ENCODE measurements at regions of chr13 and their contacts with region 1.

Region 1: DNA sequence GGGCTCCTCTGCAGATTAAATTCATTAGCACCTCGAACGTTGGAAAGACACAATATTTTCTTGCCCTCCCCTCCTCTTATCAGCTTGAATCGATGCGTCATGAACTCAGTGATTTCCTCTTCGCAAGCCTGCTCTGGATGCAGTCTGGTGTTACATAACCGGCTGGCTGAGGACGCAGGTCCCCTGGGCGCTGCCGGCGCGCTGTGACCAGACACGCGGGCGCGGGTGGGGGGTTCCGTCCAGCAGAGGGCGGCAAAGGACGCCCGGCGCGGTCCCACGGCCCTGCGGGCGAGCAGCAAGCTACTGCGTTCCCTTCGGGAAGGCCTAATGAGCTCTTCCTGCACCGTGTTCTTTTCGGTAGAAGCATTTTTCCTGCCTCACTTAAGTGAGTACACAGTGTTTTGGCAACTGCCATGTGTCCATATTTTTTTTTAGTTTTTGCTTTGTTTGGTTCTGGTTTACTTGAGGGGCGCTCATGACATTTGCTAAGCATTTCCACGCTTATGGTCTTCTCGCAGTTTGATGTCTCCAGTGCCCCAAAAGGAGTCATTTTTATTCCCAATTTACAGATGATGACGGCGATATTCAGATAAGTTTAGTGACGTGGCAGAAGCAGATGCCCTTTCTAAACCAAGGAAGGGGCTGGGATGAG is 112.2 kb upstream of the MBNL2 start:
- DNase-seq: peak; percentile 90 to 96 (median 93)
- ATAC-seq: peak; percentile 95 to 98 (median 98)
- H3K4me3 ChIP-seq: peak overlapping the region in 8 of 12 donors; percentile 15 to 52 (median 20)
- H3K27ac ChIP-seq: peak overlapping the region in 6 of 12 donors; percentile 9 to 77 (median 46)
- H3K4me1 ChIP-seq: peaks cover 0 to 31% (median 22%) of the 10 kb centered on the region in 12 donors
- H3K27me3 ChIP-seq: peaks cover 0 to 10% (median 0%) of the 10 kb centered on the region in 9 donors
- CTCF ChIP-seq: peak; percentile 96 to 100 (median 98)
- POLR2A ChIP-seq: no peak

Region 2: GRCh38 chr13:97043302-97043701 is 66.7 kb before region 1 on chr13:
- intact Hi-C with region 1: no loop called
- DNase-seq: no peak
- ATAC-seq: no peak
- H3K4me3 ChIP-seq: no peak overlapping the region
- H3K27ac ChIP-seq: no peak overlapping the region
- H3K4me1 ChIP-seq: no peaks in the 10 kb centered on the region
- H3K27me3 ChIP-seq: no peaks in the 10 kb centered on the region
- CTCF ChIP-seq: no peak
- POLR2A ChIP-seq: no peak

Region 3: DNA sequence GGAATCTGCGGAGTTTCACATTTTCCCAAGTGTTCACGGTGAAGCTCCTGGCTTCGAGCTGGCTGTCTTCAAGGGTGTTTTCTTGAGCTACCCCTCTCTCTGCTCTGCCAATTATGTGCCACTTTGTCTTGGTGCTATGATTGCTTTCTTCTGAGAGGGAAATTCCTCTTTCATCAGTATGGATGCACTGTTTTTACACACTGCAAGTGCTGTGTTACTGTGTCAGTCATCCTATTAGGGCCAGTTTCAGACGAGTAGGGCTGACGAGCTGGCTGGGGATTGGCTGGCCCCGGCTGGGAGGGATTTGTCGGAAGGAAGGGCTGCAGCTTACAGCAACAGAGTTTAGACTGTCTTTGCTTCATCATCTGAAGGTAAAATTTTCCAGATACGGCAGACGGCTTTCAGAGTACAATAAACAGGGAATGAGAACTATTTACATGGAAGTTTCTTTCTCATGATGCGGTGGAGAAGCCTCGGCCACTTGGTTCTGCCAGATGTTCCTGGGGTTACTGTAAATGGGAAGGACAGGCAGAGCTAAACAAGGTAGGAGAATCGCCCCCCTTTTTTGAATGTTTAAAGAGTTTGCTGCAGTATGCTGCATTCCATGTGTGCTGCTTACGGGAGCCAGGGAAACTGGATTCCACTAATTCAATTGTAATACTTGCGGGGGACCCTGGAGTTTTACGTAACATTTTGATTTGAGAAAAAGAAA is 112.2 kb after region 1 on chr13 and contains the start of gene MBNL2:
- intact Hi-C with region 1: loop called in 3 of 10 experiments (anchors 5 kb)
- DNase-seq: peak; percentile 91 to 93 (median 92)
- ATAC-seq: peak; percentile 93 to 98 (median 95)
- H3K4me3 ChIP-seq: peak within 1 kb of the TSS; percentile 47 to 81 (median 73)
- H3K27ac ChIP-seq: peak within 1 kb of the TSS; percentile 71 to 96 (median 90)
- H3K4me1 ChIP-seq: peaks cover 7 to 38% (median 29%) of the 10 kb centered on the region in 12 donors
- H3K27me3 ChIP-seq: no peaks in the 10 kb centered on the region
- CTCF ChIP-seq: no peak
- POLR2A ChIP-seq: peak in 1 of 2 donors; percentile 92
- total RNA-seq, gene MBNL2: 59.4 to 100 (median 83.1) TPM

Region 4: DNA sequence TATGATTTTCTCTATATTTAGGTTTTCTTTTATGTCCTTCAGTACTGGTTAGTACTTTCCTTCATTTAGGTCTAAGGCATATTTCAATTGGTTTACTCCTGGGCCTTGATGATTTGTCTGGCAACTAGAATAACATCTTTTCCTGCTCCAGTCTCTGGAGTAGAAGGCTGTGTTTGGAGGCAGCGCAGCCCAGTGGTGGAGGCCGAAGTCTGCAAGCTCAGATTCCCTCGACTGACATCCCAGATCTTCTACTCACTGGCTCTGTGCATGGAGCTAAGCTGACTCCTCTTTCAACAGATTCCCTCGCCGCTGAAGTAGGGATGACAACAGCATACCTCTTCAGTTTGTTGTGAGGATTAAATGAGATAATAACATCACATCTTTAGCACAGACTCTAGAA is 465.0 kb after region 1 on chr13:
- intact Hi-C with region 1: loop called in 2 of 10 experiments (anchors 5 to 10 kb)
- DNase-seq: peak in 3 of 5 donors; percentile 16 to 26 (median 24)
- ATAC-seq: peak; percentile 20 to 56 (median 44)
- H3K4me3 ChIP-seq: no peak overlapping the region
- H3K27ac ChIP-seq: no peak overlapping the region
- H3K4me1 ChIP-seq: peaks cover 0 to 8% (median 0%) of the 10 kb centered on the region in 12 donors
- H3K27me3 ChIP-seq: no peaks in the 10 kb centered on the region
- CTCF ChIP-seq: peak; percentile 13 to 62 (median 41)
- POLR2A ChIP-seq: no peak

Region 5: DNA sequence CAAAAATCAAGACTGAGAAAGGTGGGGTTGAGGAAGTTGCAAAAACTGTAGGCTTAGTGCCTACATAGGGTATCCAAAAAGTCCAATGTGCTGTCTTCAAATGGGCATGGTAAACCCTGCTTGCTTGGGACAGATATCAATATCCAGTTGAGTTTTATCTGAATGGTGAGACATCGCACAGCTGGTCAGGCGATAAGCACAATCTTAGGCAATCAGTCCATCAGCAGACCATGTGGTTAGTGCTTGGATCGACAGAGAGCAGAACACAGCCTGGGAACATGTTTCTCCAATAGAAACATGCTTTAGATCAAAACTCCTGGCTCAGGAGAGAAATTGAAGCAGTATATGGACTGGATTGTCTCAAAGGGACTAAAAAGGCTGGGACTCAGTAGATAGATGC is 692.2 kb after region 1 on chr13:
- intact Hi-C with region 1: loop called in 2 of 10 experiments (anchors 5 to 10 kb)
- DNase-seq: no peak
- ATAC-seq: no peak
- H3K4me3 ChIP-seq: no peak overlapping the region
- H3K27ac ChIP-seq: no peak overlapping the region
- H3K4me1 ChIP-seq: no peaks in the 10 kb centered on the region
- H3K27me3 ChIP-seq: no peaks in the 10 kb centered on the region
- CTCF ChIP-seq: no peak
- POLR2A ChIP-seq: no peak

Measured in heart left ventricle (tissue), 16 donors.